Activated CD4-positive, alpha-beta memory T cell treated with anti-CD3 and anti-CD28 coated beads for 36 hours (primary cell): ENCODE measurements at regions of chr19 and their contacts with region 1.

Region 1: GRCh38 chr19:14136509-14137281 is at the start of gene ASF1B:
- DNase-seq: peak; percentile 99
- H3K4me3 Mint-ChIP-seq: peak within 1 kb of the TSS; percentile 81
- H3K27ac Mint-ChIP-seq: peak within 1 kb of the TSS; percentile 94
- H3K4me1 Mint-ChIP-seq: peaks cover 33% of the 10 kb centered on the region
- H3K27me3 Mint-ChIP-seq: no peaks in the 10 kb centered on the region
- total RNA-seq, gene ASF1B: 67.7 to 70.8 TPM

Region 2: DNA sequence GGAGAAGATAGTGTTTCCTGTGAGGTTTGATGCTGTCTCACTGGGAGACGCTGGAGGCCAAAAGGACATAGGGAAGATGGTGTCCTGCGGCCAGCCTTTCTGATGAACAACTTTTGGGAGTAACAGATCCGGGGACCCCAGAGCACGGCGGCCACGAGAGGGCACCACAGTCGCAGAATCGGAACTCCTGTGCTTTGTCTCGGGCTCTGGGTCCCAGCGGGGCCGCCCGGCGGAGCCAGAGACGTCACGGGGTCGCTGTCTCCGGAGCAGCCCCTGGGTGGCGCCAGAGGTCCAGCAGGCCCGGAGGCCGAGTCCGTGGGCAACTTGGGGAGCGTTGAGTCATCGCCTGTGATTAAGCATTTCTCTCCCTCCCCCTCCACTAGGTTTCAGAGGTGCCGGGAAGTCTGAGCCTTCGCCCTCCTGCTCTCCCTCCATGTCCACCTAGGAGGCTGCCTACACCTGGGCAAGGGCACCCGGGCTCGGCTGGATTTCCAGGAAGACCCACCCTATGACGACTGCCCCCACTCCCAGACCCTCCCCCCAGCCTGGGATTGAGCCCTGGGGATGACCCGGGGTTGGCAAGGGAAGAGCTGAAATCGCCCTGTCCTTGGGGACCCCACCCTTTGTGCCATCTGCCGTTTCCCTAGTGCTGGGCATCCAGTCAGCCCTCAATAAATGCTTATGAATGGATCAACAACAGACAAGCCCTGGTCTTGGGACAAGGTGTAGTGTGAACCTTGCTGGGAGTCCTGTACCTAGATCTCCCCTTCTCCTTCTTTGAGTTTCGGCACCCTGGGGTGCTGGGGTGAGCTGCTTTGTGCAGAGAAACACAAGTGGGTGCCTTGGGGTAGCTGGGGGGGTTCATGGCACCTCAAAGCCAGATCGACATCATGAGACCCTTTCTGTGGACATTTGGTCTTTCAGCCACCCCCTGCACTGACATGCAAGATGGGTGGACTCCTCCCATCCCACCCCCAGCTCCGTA is 256.3 kb before region 1 on chr19:
- CTCF ChIA-PET with region 1: interaction called, 23 read pairs
- POLR2A ChIA-PET with region 1: no interaction called
- intact Hi-C with region 1: loop called (anchors 1 kb)
- DNase-seq: peak; percentile 99
- H3K4me3 Mint-ChIP-seq: peak overlapping the region; percentile 45
- H3K27ac Mint-ChIP-seq: peak overlapping the region; percentile 86
- H3K4me1 Mint-ChIP-seq: peaks cover 26% of the 10 kb centered on the region
- H3K27me3 Mint-ChIP-seq: no peaks in the 10 kb centered on the region

Region 3: GRCh38 chr19:14039181-14039580 is 97.5 kb before region 1 on chr19:
- CTCF ChIA-PET with region 1: no interaction called
- POLR2A ChIA-PET with region 1: no interaction called
- intact Hi-C with region 1: no loop called
- DNase-seq: no peak
- H3K4me3 Mint-ChIP-seq: no peak overlapping the region
- H3K27ac Mint-ChIP-seq: no peak overlapping the region
- H3K4me1 Mint-ChIP-seq: peaks cover 19% of the 10 kb centered on the region
- H3K27me3 Mint-ChIP-seq: no peaks in the 10 kb centered on the region

Region 4: DNA sequence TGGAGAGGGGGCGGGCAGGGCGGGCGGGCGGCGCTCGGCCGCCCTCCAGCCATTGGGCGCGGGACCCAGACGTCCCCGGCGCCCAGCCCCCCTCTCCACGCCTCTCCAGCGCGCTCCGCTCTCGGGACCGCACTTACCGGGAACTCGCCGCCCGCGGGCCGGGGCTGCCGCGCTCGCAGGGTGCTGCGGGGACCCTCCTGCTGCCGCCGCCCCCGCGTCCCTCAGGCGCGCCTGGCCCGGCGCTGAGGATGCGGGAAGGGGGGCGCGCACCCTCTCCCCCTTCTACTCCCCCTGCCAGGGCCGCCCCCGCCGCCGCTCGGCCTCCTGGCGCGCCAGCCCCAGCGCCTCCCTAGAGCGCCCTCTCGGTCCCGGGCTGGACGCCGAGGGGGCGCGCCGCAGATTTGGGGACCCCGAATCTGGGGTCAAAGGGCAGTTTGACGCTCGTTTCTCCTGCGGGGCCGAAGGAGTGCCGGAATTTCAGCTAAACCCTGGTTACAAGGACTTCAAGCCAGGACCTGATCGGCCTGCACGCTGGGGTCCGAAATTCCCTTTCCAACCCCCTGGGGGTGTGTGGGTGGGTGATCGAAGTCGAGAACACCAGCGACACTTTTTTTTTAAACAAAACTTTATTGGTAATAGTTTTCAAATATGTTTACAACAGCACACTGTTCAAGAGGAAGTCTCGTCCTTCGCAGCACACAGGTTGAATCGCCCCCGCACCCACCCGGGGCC is 45.4 kb before region 1 on chr19:
- CTCF ChIA-PET with region 1: interaction called, 6 read pairs
- POLR2A ChIA-PET with region 1: interaction called, 5 read pairs
- intact Hi-C with region 1: loop called (anchors 1 kb)
- DNase-seq: peak; percentile 83
- H3K4me3 Mint-ChIP-seq: peak overlapping the region; percentile 89
- H3K27ac Mint-ChIP-seq: peak overlapping the region; percentile 95
- H3K4me1 Mint-ChIP-seq: peaks cover 22% of the 10 kb centered on the region
- H3K27me3 Mint-ChIP-seq: no peaks in the 10 kb centered on the region

Region 5: DNA sequence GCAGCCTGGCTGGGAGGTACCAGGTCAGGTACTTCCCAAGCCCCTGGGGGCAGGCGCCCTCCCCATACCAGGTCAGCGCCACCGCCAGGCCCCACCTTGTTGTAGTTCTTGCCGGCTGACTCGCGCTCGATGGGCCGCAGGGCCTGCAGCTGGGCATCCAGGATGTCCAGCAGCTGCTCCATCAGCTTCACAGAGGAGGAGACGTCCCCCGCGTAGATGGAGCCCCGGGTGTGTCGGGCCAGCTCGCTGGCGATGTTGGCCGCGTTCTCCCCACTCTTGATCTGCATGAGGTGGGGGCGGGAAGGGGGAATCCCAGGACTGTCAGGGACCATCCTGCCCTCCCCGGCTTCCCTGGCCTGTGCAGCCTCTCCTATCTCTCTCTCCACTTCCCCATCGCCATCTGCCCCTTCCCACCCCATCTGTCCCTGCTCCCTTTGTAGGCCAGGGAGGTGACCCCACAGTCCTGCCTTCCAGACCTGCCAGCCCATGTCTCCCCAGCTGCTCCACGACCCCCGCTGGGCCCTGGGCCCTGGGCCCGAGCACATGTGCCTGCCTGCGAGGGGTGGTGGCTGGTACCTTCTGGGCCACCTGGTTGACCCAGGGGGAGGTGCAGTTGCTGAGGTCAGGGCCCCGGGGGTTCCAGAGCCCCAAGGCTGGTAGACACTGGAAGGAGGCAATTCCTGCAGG is 23.5 kb after region 1 on chr19:
- CTCF ChIA-PET with region 1: interaction called, 12 read pairs
- POLR2A ChIA-PET with region 1: no interaction called
- intact Hi-C with region 1: no loop called
- DNase-seq: no peak
- H3K4me3 Mint-ChIP-seq: no peak overlapping the region
- H3K27ac Mint-ChIP-seq: no peak overlapping the region
- H3K4me1 Mint-ChIP-seq: no peaks in the 10 kb centered on the region
- H3K27me3 Mint-ChIP-seq: no peaks in the 10 kb centered on the region

Region 6: DNA sequence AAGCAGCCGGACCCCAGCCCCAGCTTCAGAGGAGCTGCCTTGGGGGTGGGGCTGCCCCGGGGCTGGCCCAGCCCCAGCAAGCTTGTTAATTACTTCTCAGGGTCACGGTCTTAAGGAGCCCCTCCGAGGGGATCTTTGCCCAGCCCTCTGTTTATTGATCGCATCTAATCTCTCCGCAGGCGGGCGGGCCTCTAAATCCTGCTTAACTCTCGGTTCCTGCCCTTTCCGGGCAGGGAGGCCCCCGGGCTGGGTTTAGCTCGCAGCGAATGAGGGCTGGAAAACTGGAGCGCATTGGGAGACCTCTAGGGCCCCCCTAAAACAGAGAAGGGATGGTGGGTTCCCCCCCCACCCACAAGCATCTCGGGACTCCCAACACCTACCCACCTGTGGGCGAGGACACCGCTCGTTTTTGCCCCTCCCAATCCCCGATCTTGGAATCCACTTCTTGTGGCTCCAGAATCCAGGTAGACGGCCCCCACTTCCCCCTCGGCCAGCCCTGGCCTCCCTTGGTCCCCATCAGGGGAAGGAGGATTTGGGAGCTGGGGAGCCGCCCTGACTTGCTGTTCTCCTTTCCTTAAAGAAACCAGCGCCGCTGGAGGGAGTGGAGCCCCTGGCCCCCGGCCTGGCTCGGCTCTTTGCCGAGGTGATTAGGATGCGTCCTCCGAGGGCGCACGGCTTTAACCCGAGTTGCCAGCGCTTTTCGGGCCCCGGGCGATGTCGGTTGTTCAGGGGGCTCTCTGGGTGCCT is 128.8 kb after region 1 on chr19:
- CTCF ChIA-PET with region 1: no interaction called
- POLR2A ChIA-PET with region 1: no interaction called
- intact Hi-C with region 1: no loop called
- DNase-seq: no peak
- H3K4me3 Mint-ChIP-seq: no peak overlapping the region
- H3K27ac Mint-ChIP-seq: no peak overlapping the region
- H3K4me1 Mint-ChIP-seq: no peaks in the 10 kb centered on the region
- H3K27me3 Mint-ChIP-seq: no peaks in the 10 kb centered on the region

Region 7: DNA sequence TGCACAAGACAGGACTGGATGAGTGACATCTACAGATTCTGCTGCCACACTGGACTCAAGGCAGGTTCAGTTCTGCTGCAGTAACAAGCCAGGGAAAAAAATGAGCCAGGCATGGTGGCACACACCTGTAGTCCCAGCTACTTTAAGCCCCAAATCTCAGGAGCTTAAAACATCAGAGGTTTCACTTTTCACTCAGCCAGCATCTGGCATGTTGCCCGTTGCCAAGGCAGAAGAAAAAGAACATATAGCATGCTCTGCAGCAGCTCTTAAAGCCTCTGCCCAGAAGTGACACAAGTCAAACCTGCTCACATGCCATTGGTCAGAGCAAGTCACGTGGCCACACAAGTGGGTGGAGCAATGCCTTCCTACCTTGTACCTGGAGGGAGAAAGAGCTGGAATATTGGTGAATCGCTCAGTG is 229.8 kb after region 1 on chr19:
- CTCF ChIA-PET with region 1: interaction called, 8 read pairs
- POLR2A ChIA-PET with region 1: interaction called, 5 read pairs
- intact Hi-C with region 1: loop called (anchors 5 kb)
- DNase-seq: peak; percentile 96
- H3K4me3 Mint-ChIP-seq: peak overlapping the region; percentile 63
- H3K27ac Mint-ChIP-seq: peak overlapping the region; percentile 100
- H3K4me1 Mint-ChIP-seq: peaks cover 67% of the 10 kb centered on the region
- H3K27me3 Mint-ChIP-seq: no peaks in the 10 kb centered on the region

Region 8: DNA sequence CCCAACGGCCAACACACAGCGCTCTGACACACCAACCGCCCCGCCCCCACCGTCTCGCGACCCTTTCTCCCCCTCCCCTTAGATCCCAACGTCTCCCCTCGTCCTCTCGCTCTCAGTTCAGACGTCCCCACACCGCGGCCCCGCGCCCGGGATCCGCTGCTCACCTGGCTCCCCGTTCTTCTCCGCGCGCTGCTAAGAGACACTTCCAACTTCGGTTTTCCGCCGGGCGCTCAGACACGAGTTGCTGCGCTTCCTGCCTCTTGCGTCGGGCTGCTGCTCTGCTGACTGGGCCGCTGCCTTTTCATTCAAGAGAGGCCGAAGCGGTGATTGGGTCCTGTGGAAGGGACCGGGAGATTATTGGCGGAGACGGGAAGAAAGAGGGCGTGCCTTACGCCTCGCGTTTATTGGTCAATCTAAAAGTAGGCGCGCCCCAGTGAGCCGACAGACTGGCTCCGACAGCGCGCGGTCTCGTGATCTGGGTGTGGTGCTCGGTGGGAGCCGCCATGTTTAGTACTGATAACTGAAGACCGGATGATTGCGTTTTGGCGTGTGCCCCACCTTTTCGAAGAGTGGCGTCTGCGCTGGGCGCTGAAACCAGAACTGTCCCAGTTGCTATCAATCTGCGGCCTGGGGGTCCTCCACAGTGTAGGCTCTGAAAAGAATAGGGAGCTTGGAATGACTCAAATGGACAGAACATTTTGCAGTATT is 282.6 kb after region 1 on chr19 and contains the start of gene DDX39A:
- CTCF ChIA-PET with region 1: interaction called, 5 read pairs
- POLR2A ChIA-PET with region 1: interaction called, 5 read pairs
- intact Hi-C with region 1: loop called (anchors 2 kb)
- DNase-seq: peak; percentile 99
- H3K4me3 Mint-ChIP-seq: peak within 1 kb of the TSS; percentile 95
- H3K27ac Mint-ChIP-seq: peak within 1 kb of the TSS; percentile 96
- H3K4me1 Mint-ChIP-seq: peaks cover 29% of the 10 kb centered on the region
- H3K27me3 Mint-ChIP-seq: peaks cover 2% of the 10 kb centered on the region
- total RNA-seq, gene DDX39A: 200 to 204 TPM